Activated CD4-positive, alpha-beta T cell treated with anti-CD3 and anti-CD28 coated beads, Interleukin-2, amount 10 ng/mL, durations not matched to agents 7 days and 5 days (primary cell): ENCODE measurements at regions of chr6 and their contacts with region 1.

Region 1: GRCh38 chr6:53309059-53309900 is 39.5 kb downstream of the ELOVL5 start:
- DNase-seq: peak; percentile 22
- H3K4me3 Mint-ChIP-seq: no peak overlapping the region
- H3K27ac Mint-ChIP-seq: no peak overlapping the region
- H3K4me1 Mint-ChIP-seq: peaks cover 79% of the 10 kb centered on the region
- H3K27me3 Mint-ChIP-seq: no peaks in the 10 kb centered on the region

Region 2: GRCh38 chr6:53205778-53206177 is 103.5 kb before region 1 on chr6:
- CTCF ChIA-PET with region 1: no interaction called
- POLR2A ChIA-PET with region 1: no interaction called
- DNase-seq: no peak
- H3K4me3 Mint-ChIP-seq: no peak overlapping the region
- H3K27ac Mint-ChIP-seq: no peak overlapping the region
- H3K4me1 Mint-ChIP-seq: peaks cover 2% of the 10 kb centered on the region
- H3K27me3 Mint-ChIP-seq: peaks cover 2% of the 10 kb centered on the region

Region 3: GRCh38 chr6:53294095-53294494 is 15.2 kb before region 1 on chr6:
- CTCF ChIA-PET with region 1: no interaction called
- POLR2A ChIA-PET with region 1: no interaction called
- DNase-seq: no peak
- H3K4me3 Mint-ChIP-seq: no peak overlapping the region
- H3K27ac Mint-ChIP-seq: no peak overlapping the region
- H3K4me1 Mint-ChIP-seq: peaks cover 57% of the 10 kb centered on the region
- H3K27me3 Mint-ChIP-seq: no peaks in the 10 kb centered on the region

Region 4: GRCh38 chr6:53322188-53323029 is 13.1 kb after region 1 on chr6:
- CTCF ChIA-PET with region 1: interaction called, 11 read pairs
- POLR2A ChIA-PET with region 1: no interaction called
- DNase-seq: no peak
- H3K4me3 Mint-ChIP-seq: no peak overlapping the region
- H3K27ac Mint-ChIP-seq: peak overlapping the region; percentile 46
- H3K4me1 Mint-ChIP-seq: peaks cover 51% of the 10 kb centered on the region
- H3K27me3 Mint-ChIP-seq: no peaks in the 10 kb centered on the region

Region 5: GRCh38 chr6:53330137-53330536 is 20.9 kb after region 1 on chr6:
- CTCF ChIA-PET with region 1: interaction called, 13 read pairs
- POLR2A ChIA-PET with region 1: no interaction called
- DNase-seq: no peak
- H3K4me3 Mint-ChIP-seq: no peak overlapping the region
- H3K27ac Mint-ChIP-seq: no peak overlapping the region
- H3K4me1 Mint-ChIP-seq: peaks cover 68% of the 10 kb centered on the region
- H3K27me3 Mint-ChIP-seq: no peaks in the 10 kb centered on the region